Naive thymus-derived CD8-positive, alpha-beta T cell (primary cell): ENCODE measurements at regions of chr1 and their contacts with region 1.

Region 1: DNA sequence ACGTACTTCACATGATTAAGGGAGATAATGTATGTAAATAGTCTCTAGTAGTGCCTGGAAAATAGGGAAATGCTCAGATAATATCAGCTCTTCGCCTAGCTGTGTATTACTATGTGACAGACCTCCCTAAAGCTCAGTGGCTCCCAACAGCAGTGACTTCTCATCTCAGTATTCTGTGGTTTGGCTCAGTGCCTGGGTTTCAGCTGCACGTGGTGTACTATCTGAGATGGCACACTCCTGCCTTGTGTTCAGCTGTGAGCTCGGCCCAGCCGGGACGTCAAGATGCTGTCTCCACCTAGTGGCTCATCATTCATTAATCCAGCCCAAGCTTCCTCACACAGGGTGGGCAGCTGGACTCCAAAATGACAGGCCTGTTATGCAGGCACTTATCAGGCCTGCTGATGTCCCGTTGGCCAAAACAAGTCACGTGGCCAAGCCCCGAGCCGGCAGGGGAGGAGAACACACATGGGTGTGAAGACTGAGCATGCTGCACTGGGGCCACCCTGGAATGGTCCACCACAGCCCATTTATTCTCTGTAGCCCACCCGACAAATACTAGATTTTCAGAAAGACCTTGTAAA is 17.8 kb downstream of the SLFNL1 start:
- DNase-seq: peak; percentile 60 to 94 (median 86)
- ATAC-seq: peak; percentile 99 to 100
- H3K4me3 Mint-ChIP-seq: peak overlapping the region in 4 of 10 donors; percentile 1 to 64 (median 26)
- H3K27ac Mint-ChIP-seq: peak overlapping the region in 9 of 10 donors; percentile 9 to 92 (median 63)
- H3K4me1 Mint-ChIP-seq: peaks cover 19 to 21% (median 21%) of the 10 kb centered on the region in 4 donors
- H3K27me3 Mint-ChIP-seq: no peaks in the 10 kb centered on the region

Region 2: DNA sequence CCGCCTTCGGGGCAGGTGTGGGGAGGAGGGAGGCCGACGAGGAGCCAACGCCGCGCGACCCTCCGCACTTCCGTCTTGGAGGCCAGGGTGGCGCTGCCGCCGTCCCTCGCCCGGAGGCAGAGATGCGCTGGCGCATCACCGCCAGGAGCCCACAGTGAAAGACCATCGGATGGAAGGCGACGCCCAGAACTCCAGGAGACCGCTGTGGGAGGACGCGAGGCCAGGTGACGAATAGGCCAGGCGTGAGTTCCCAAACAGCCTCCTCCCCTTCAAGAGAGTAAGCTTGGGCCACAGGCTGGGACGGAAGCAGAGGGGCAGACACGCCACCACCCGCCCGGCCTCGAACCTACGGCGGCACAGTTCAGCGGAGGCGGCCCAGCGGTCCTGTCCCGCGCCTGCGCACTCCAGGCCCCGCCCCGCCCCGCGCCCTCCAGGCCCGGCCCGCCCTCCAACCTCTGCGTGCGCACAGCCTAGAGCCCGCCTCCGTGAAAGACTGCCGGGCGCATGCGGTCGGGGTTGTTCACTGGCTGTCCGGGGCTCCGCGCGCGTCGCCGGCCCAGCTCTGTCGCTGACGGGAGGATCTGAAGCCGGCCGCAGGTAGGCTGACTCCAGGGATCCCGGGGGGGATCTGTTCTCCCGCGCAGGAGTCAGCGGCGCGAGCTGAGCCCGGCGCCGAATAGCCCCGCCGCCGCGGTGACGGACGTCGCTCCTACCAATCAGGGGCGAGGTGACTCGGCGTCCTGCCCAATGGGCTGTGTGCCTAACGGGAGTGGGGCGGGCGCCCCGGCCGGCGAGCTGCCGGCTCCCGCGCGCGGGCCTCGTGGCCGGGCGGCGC is 24.3 kb before region 1 on chr1 and contains the start of gene CTPS1:
- POLR2A ChIA-PET with region 1: interaction called, 28 read pairs
- DNase-seq: peak; percentile 89 to 98 (median 96)
- ATAC-seq: peak; percentile 88 to 89
- H3K4me3 Mint-ChIP-seq: peak within 1 kb of the TSS; percentile 81 to 99 (median 96)
- H3K27ac Mint-ChIP-seq: peak within 1 kb of the TSS; percentile 83 to 99 (median 98)
- H3K4me1 Mint-ChIP-seq: peaks cover 23 to 37% (median 24%) of the 10 kb centered on the region in 4 donors
- H3K27me3 Mint-ChIP-seq: no peaks in the 10 kb centered on the region
- polyA plus RNA-seq, gene CTPS1: 12.7 to 21.3 (median 19.0) TPM